ENCODE measurements at regions of chr7 and their contacts with region 1.

Region 1: GRCh38 chr7:6516387-6516983 is 34.8 kb downstream of the GRID2IP start:
- DNase-seq: peak; percentile 8
- ATAC-seq: peak; percentile 93
- H3K4me3 ChIP-seq: peak overlapping the region; percentile 25; the same call in 1 of the 2 replicates
- H3K27ac ChIP-seq: no peak overlapping the region
- H3K4me1 ChIP-seq: peaks cover 3% of the 10 kb centered on the region; the same call in 1 of the 2 replicates
- H3K27me3 ChIP-seq: no peaks in the 10 kb centered on the region
- CTCF ChIP-seq: peak; percentile 72 to 93 (median 85)
- EP300 ChIP-seq: no peak
- POLR2A ChIP-seq: no peak
- RAD21 ChIP-seq: peak; percentile 81

Region 2: DNA sequence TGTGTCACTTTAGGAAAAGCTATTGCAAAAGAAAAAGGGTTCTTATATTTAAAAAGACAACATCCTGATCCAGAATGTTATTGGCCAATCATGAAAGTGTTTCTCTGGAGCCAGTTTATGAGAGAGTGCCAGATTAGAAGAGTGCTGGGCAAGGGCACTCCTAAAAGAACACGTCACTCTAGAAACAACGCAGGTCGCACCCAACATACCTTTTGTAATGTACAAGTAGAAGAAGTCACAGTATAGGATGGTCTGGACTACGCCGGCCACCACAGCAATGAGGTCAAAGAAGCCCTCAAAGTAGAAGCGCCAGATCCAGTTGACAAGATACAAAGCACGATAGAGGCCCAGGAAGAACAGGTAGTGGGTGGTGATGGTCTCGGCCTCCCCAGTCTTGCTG is 50.6 kb before region 1 on chr7:
- CTCF ChIA-PET with region 1: no interaction called
- POLR2A ChIA-PET with region 1: no interaction called
- RAD21 ChIA-PET with region 1: no interaction called
- SMC1A ChIA-PET with region 1: no interaction called
- in situ Hi-C with region 1: no loop called
- intact Hi-C with region 1: no loop called
- DNase-seq: no peak
- ATAC-seq: no peak
- H3K4me3 ChIP-seq: no peak overlapping the region
- H3K27ac ChIP-seq: no peak overlapping the region
- H3K4me1 ChIP-seq: no peaks in the 10 kb centered on the region
- H3K27me3 ChIP-seq: no peaks in the 10 kb centered on the region
- CTCF ChIP-seq: no peak
- EP300 ChIP-seq: no peak
- POLR2A ChIP-seq: no peak
- RAD21 ChIP-seq: no peak

Region 3: DNA sequence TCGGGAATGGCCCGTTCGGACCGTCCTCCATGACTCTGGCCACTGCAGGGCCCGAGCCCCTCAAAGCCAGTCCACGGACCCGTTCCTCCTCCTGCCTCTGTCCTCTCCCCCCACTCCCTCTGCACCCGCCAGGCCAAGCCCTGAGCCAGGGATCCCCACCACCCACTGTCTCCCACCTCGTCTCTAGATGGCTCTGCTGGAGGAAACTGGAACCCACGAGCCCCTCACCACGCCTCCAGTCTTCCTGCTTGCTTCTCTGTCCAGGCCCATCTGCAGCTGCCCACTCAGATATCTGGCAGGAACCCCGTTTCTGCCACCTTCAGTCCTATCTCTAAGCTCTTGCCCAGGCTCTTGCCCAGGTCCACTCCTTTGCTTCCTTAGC is 10.5 kb after region 1 on chr7:
- CTCF ChIA-PET with region 1: interaction called, 11 read pairs
- POLR2A ChIA-PET with region 1: no interaction called
- RAD21 ChIA-PET with region 1: no interaction called
- SMC1A ChIA-PET with region 1: no interaction called
- in situ Hi-C with region 1: no loop called
- intact Hi-C with region 1: no loop called
- DNase-seq: no peak
- ATAC-seq: no peak
- H3K4me3 ChIP-seq: no peak overlapping the region
- H3K27ac ChIP-seq: no peak overlapping the region
- H3K4me1 ChIP-seq: no peaks in the 10 kb centered on the region
- H3K27me3 ChIP-seq: peaks cover 0 to 3% of the 10 kb centered on the region in 2 experiments; a peak in 3 of 4 replicates
- CTCF ChIP-seq: no peak
- EP300 ChIP-seq: no peak
- POLR2A ChIP-seq: no peak
- RAD21 ChIP-seq: no peak

Region 4: GRCh38 chr7:6571160-6571779 is 54.8 kb after region 1 on chr7:
- CTCF ChIA-PET with region 1: interaction called, 38 read pairs
- POLR2A ChIA-PET with region 1: no interaction called
- RAD21 ChIA-PET with region 1: interaction called, 16 read pairs
- SMC1A ChIA-PET with region 1: interaction called, 15 read pairs
- in situ Hi-C with region 1: no loop called
- intact Hi-C with region 1: loop called (anchors 5 kb)
- DNase-seq: no peak
- ATAC-seq: peak; percentile 53; the same call in 2 of the 3 replicates
- H3K4me3 ChIP-seq: no peak overlapping the region
- H3K27ac ChIP-seq: no peak overlapping the region
- H3K4me1 ChIP-seq: 0 out of 2 replicates have a peak, but pooled peaks cover 3% of the 10 kb centered on the region
- H3K27me3 ChIP-seq: no peaks in the 10 kb centered on the region
- CTCF ChIP-seq: no peak
- EP300 ChIP-seq: no peak
- POLR2A ChIP-seq: no peak
- RAD21 ChIP-seq: no peak

Region 5: GRCh38 chr7:6589829-6590644 is 73.6 kb after region 1 on chr7 and contains the start of gene INTS15:
- CTCF ChIA-PET with region 1: interaction called, 12 read pairs
- POLR2A ChIA-PET with region 1: no interaction called
- RAD21 ChIA-PET with region 1: interaction called, 5 read pairs
- SMC1A ChIA-PET with region 1: interaction called, 4 read pairs
- in situ Hi-C with region 1: no loop called
- intact Hi-C with region 1: no loop called
- DNase-seq: no peak
- ATAC-seq: peak; percentile 93
- H3K4me3 ChIP-seq: peak within 1 kb of the TSS; percentile 87
- H3K27ac ChIP-seq: peak within 1 kb of the TSS; percentile 79
- H3K4me1 ChIP-seq: peaks cover 10% of the 10 kb centered on the region
- H3K27me3 ChIP-seq: no peaks in the 10 kb centered on the region
- CTCF ChIP-seq: peak; percentile 53 to 78 (median 68); a peak in 5 of 6 replicates
- EP300 ChIP-seq: no peak
- POLR2A ChIP-seq: peak; percentile 82
- RAD21 ChIP-seq: peak; percentile 44; the same call in 1 of the 2 replicates
- polyA plus RNA-seq, gene INTS15: 0.89 to 2.4 TPM

Region 6: DNA sequence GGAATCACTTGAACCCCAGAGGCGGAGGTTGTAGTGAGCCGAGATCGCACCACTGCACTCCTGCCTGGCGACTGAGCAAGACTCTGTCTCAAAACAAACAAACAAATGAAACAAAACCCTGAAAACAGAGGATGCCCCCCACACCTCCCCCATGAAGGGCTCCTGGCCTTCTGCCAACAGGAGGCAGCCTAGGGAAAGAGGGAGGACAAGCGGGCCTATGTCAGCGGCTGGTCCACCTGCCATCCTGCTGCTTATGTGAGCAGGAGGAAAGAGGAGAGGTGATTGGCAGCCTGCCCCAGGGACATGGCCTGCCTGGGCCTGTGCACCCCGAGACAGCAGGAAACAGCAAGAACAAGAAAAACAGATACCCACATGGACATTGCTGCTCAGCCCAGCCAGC is 111.5 kb after region 1 on chr7:
- CTCF ChIA-PET with region 1: no interaction called
- POLR2A ChIA-PET with region 1: no interaction called
- RAD21 ChIA-PET with region 1: no interaction called
- SMC1A ChIA-PET with region 1: no interaction called
- in situ Hi-C with region 1: no loop called
- intact Hi-C with region 1: no loop called
- DNase-seq: no peak
- ATAC-seq: no peak
- H3K4me3 ChIP-seq: no peak overlapping the region
- H3K27ac ChIP-seq: no peak overlapping the region
- H3K4me1 ChIP-seq: peaks cover 8% of the 10 kb centered on the region
- H3K27me3 ChIP-seq: no peaks in the 10 kb centered on the region
- CTCF ChIP-seq: no peak
- EP300 ChIP-seq: no peak
- POLR2A ChIP-seq: no peak
- RAD21 ChIP-seq: no peak